ENCODE measurements at regions of chr1 and their contacts with region 1.

Region 1: DNA sequence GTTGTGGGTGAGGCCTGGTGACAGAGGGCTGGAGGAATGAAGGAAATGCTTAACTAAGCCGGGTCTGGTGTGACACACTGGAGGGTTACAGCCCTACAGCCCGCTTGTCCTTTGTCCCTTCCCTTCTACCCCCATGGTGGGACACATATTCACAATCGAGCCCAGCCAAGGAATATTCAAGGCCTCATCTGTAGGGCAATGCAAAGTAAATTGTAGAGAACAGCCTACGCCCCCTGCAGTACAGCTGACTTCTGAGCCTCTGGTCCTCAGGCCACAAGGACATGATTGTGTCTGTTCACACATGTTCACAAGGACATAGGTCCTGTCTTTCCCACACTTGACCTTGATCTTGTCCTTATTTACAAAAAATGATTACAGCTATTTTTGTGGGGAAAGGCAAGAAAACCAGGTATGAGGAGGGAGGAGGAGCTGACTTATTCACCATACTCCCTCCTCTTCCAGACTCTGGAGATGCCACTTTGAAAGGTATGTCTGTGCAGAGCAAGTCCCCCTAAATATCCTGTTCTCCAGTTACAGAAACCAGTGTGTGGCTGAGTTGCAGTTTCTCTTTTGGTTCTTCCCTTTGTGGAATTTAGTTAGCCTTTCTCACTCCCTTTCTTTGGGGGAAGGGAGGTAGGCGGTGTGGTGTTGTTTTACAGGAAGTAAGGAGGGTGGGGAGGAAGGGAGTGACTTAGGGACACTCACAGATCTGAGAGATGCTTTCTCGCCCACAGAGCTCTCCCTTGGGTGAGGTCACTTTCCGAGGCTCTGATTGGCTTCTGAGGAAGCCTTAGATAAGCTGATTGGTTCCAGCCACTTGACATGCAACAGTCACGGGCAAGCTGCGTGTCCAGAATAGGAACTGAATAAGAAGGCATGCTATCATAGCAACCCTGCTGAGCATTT is 14.6 kb downstream of the POLR3GL start:
- DNase-seq: peak; percentile 67 to 90
- H3K4me3 ChIP-seq: peak overlapping the region; percentile 1 to 41 (median 13); a peak in 5 of 8 replicates
- H3K27ac ChIP-seq: peak overlapping the region; percentile 89
- H3K4me1 ChIP-seq: peaks cover 4 to 18% (median 13%) of the 10 kb centered on the region in 4 experiments; a peak in 5 of 7 replicates
- H3K27me3 ChIP-seq: no peaks in the 10 kb centered on the region
- CTCF ChIP-seq: peak; percentile 23 to 53 (median 37); a peak in 3 of 4 replicates
- EP300 ChIP-seq: peak in 1 of 2 experiments; percentile 65; a peak in 1 of 3 replicates
- POLR2A ChIP-seq: peak in 1 of 2 experiments; percentile 70; a peak in 2 of 3 replicates
- RAD21 ChIP-seq: peak in 1 of 2 experiments; percentile 10; a peak in 1 of 4 replicates

Region 2: GRCh38 chr1:145729666-145730436 is 249.3 kb before region 1 on chr1:
- CTCF ChIA-PET with region 1: no interaction called
- POLR2A ChIA-PET with region 1: no interaction called
- DNase-seq: no peak
- H3K4me3 ChIP-seq: no peak overlapping the region
- H3K27ac ChIP-seq: no peak overlapping the region
- H3K4me1 ChIP-seq: peaks cover 0 to 6% (median 0%) of the 10 kb centered on the region in 4 experiments; a peak in 3 of 7 replicates
- H3K27me3 ChIP-seq: no peaks in the 10 kb centered on the region
- CTCF ChIP-seq: no peak
- EP300 ChIP-seq: no peak
- POLR2A ChIP-seq: no peak
- RAD21 ChIP-seq: no peak

Region 3: DNA sequence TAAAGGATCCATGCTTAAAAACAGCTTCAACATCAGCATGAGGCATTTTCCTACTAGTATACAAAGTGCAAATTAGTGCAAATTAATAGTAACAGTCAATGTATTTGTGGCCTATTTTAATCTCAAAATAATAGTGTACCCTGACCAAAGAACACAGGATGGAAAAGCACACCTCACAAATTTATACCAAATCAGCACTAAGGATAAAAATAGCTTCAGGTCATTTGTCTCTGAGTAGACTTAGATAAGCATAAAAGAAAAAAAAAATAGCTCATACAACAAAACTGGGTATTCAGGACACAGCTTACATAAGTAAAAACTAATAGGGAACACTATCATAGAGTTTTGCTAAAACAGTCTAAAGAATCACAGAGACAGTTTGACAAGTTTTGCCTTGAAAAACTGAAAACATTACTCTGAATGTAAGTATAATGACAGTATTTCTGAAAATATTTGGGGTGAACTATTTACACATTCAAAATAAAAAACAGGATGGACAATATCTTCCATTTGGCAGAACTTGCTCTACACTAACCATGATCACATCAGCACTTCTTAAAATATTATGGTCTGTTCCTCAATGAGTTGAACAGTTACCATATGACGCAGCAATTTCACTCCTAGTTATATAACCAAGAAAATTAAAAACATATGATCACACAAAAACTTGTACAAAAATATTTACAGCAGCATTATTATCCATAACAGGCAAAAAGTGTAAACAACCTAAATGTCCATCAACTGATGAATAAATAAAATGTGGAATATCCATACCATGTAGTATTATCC is 201.6 kb before region 1 on chr1:
- CTCF ChIA-PET with region 1: no interaction called
- POLR2A ChIA-PET with region 1: no interaction called
- DNase-seq: no peak
- H3K4me3 ChIP-seq: no peak overlapping the region
- H3K27ac ChIP-seq: no peak overlapping the region
- H3K4me1 ChIP-seq: no peaks in the 10 kb centered on the region
- H3K27me3 ChIP-seq: no peaks in the 10 kb centered on the region
- CTCF ChIP-seq: no peak
- EP300 ChIP-seq: no peak
- POLR2A ChIP-seq: no peak
- RAD21 ChIP-seq: no peak

Region 4: DNA sequence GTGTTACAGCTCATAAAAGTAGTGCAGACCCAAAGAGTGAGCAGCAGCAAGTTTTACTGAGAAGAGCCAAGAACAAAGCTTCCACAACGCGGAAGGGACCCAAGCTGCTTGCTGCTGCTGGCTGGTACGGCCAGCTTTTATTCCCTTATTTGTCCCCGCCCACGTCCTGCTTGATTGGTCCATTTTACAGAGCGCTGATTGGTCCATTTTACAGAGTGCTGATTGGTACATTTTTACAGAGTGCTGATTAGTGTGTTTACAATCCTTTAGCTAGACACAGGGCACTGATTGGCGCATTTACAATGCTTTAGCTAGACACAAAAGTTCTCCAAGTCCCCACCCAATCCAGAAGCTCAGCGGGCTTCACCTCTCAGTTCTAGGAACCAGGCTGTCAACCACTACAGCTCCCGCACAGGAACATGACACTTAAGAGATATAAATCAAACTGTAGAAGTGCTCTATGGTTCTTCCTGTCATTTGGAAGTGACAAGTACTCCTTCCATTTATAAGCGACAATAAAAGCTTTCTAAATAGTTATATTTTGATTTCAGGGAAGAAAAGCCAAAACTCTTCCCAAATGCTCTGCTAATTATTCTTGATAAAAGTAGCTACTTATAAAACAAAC is 183.7 kb before region 1 on chr1:
- CTCF ChIA-PET with region 1: no interaction called
- POLR2A ChIA-PET with region 1: no interaction called
- DNase-seq: no peak
- H3K4me3 ChIP-seq: no peak overlapping the region
- H3K27ac ChIP-seq: no peak overlapping the region
- H3K4me1 ChIP-seq: peaks cover 0 to 3% (median 0%) of the 10 kb centered on the region in 4 experiments; a peak in 2 of 7 replicates
- H3K27me3 ChIP-seq: no peaks in the 10 kb centered on the region
- CTCF ChIP-seq: no peak
- EP300 ChIP-seq: no peak
- POLR2A ChIP-seq: no peak
- RAD21 ChIP-seq: no peak

Region 5: DNA sequence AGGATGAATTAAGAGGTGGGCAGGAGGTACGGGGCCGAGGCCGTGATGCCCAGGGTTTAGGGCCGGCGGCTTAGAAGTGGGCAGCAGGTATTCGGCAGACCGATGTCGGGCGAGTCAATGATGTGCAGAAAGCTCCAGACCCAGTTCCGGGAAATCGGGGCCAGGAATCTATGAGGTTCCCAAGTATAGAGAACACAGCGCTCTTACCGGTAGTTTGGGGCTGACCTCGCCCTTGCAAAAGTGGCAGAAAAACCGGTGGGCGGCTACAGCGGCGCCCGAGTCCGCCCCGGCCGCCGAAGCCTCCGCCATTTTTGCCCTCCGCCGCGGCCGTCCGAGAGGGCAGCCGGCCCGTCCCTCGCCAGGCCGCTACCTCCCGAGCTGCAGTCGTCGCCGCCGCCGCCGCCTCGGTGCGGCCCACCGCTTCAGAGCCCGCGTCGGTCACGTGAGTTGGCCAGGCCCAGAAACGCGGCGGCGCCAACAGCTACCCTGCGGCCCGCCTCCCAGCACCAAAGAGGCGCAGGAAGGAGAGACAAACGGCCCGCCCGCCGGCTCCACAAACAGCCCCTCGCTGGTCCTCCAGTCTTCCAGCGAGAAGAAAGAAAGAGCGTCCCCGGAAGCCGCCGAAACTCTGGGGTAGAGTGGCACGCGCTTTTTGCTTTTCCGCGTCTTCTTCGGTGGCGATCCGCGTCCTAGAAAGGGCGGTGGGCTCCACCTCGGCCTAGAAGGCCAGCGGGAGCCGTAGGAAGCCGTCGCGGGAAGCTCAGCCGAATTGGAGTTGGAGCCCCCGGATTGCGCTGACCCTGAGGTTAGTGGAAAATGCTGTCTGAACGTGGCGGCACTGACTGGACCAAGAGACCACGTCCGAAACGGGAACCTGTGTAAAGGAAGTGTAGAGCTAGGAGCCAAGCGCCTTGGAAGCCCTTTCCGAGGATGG is 155.3 kb before region 1 on chr1 and contains the starts of genes POLR3C and RNF115:
- CTCF ChIA-PET with region 1: no interaction called
- POLR2A ChIA-PET with region 1: no interaction called
- DNase-seq: peak; percentile 62 to 88
- H3K4me3 ChIP-seq: peak within 1 kb of the TSS; percentile 75 to 100 (median 98)
- H3K27ac ChIP-seq: peak within 1 kb of the TSS; percentile 91
- H3K4me1 ChIP-seq: peaks cover 0 to 4% (median 0%) of the 10 kb centered on the region in 4 experiments; a peak in 1 of 7 replicates
- H3K27me3 ChIP-seq: no peaks in the 10 kb centered on the region
- CTCF ChIP-seq: no peak
- EP300 ChIP-seq: peak in 1 of 2 experiments; percentile 33; a peak in 1 of 3 replicates
- POLR2A ChIP-seq: peak in 1 of 2 experiments; percentile 69; a peak in 2 of 3 replicates
- RAD21 ChIP-seq: no peak
- total RNA-seq, gene POLR3C: 26.2 and 26.8 TPM in 2 replicates
- total RNA-seq, gene RNF115: 10.2 and 10.8 TPM in 2 replicates

Region 6: GRCh38 chr1:145858894-145859490 is 120.1 kb before region 1 on chr1 and contains the start of gene PIAS3:
- CTCF ChIA-PET with region 1: interaction called, 17 read pairs
- POLR2A ChIA-PET with region 1: interaction called, 3 read pairs
- DNase-seq: peak; percentile 72 to 95
- H3K4me3 ChIP-seq: peak within 1 kb of the TSS; percentile 63 to 95 (median 89)
- H3K27ac ChIP-seq: peak within 1 kb of the TSS; percentile 78
- H3K4me1 ChIP-seq: peaks cover 0 to 5% (median 3%) of the 10 kb centered on the region in 4 experiments; a peak in 4 of 7 replicates
- H3K27me3 ChIP-seq: no peaks in the 10 kb centered on the region
- CTCF ChIP-seq: no peak
- EP300 ChIP-seq: peak in 1 of 2 experiments; percentile 61; a peak in 1 of 3 replicates
- POLR2A ChIP-seq: no peak; a peak in 1 of 3 replicates
- RAD21 ChIP-seq: no peak
- total RNA-seq, gene PIAS3: 36.7 and 40.7 TPM in 2 replicates

Region 7: DNA sequence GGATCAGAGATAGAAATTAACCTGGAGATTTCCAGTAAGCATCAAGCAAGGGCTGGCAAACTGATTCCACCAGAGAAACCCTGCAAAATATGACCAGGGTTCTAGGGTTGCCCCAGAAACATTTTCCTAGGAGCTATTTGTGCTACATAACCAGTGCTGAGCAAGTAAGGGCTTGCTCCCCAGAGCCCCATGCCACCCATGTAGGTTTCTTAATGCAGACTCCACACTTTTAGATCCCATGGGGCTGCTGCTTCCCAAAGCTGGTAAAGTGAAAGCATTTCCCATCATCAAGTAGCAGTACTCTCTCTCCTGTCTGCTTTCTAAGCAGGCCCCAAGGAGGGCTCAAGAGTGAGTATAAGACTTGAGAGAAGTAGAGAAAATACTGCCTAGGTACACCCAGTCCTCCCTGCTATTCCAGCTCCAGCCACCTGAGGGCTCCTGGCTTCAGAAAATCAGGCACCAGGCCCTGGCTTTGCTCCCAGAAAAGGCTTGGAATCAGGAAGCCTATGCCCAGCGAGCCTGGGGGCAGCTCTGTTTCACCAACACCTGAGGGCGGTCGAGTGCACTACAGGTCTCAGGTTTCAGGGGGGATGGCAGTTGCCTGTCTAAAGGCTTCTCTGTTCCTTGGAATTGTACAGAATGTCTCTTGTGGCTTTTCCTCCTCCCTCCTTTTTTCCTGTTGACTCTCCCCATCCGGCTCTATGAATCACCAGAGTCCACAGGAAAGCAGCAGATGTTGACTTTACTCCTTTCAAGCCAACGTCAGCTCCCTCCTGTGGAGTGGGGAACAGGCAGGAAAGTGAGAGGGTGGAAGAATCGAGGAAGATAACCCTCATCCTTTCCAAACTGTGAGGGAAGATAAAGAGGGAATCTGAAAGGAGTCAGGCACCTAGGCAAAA is 87.3 kb before region 1 on chr1:
- CTCF ChIA-PET with region 1: interaction called, 34 read pairs
- POLR2A ChIA-PET with region 1: no interaction called
- DNase-seq: peak; percentile 94 to 96
- H3K4me3 ChIP-seq: peak overlapping the region in 3 of 4 experiments; percentile 2 to 48 (median 3); a peak in 4 of 8 replicates
- H3K27ac ChIP-seq: no peak overlapping the region
- H3K4me1 ChIP-seq: peaks cover 0 to 6% (median 4%) of the 10 kb centered on the region in 4 experiments; a peak in 3 of 7 replicates
- H3K27me3 ChIP-seq: no peaks in the 10 kb centered on the region
- CTCF ChIP-seq: peak; percentile 84 to 99 (median 99)
- EP300 ChIP-seq: no peak
- POLR2A ChIP-seq: peak in 1 of 2 experiments; percentile 27; a peak in 1 of 3 replicates
- RAD21 ChIP-seq: peak; percentile 96 to 99

Region 8: GRCh38 chr1:145996433-145997015 is 17.4 kb after region 1 on chr1 and contains the start of gene TXNIP:
- CTCF ChIA-PET with region 1: interaction called, 93 read pairs
- POLR2A ChIA-PET with region 1: interaction called, 218 read pairs
- DNase-seq: peak; percentile 76 to 86
- H3K4me3 ChIP-seq: peak within 1 kb of the TSS; percentile 89 to 96 (median 93)
- H3K27ac ChIP-seq: peak within 1 kb of the TSS; percentile 65
- H3K4me1 ChIP-seq: peaks cover 2 to 8% (median 6%) of the 10 kb centered on the region in 4 experiments; a peak in 4 of 7 replicates
- H3K27me3 ChIP-seq: no peaks in the 10 kb centered on the region
- CTCF ChIP-seq: no peak
- EP300 ChIP-seq: peak in 1 of 2 experiments; percentile 44; a peak in 1 of 3 replicates
- POLR2A ChIP-seq: peak; percentile 89 to 90
- RAD21 ChIP-seq: no peak
- total RNA-seq, gene TXNIP: 10.3 and 12.3 TPM in 2 replicates

Region 9: DNA sequence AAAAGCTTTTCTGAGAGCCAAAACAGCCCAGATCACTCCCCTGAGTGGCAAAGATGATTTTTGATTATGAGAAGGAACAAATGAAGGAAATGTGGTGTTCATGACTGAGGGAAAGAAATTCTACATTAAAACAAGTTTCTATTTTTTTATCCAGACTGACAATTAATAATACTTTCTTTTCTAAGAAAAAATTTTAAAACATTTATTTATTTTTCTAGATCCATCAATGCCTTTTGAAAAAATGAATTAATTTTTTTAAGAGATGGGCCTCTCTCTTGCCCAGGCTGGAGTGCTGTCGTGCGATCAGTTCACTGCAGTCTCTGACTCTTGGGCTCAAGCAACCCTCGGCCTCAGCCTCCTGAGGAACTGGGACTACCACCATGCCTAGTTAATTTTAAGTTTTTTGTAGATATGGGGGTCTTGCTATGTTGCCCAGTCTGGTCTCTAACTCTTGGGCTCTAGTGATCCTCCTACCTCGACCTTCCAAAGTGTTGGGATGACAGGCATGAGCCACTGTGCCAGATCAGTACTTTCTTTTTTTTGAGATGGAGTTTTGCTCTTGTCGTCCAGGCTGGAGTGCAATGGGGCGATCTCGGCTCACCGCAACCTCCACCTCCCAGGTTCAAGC is 28.5 kb after region 1 on chr1:
- CTCF ChIA-PET with region 1: interaction called, 152 read pairs
- POLR2A ChIA-PET with region 1: interaction called, 30 read pairs
- DNase-seq: no peak
- H3K4me3 ChIP-seq: no peak overlapping the region
- H3K27ac ChIP-seq: no peak overlapping the region
- H3K4me1 ChIP-seq: no peaks in the 10 kb centered on the region; a peak in 1 of 7 replicates
- H3K27me3 ChIP-seq: no peaks in the 10 kb centered on the region
- CTCF ChIP-seq: no peak
- EP300 ChIP-seq: no peak
- POLR2A ChIP-seq: no peak
- RAD21 ChIP-seq: no peak

Region 10: GRCh38 chr1:146019231-146020057 is 40.3 kb after region 1 on chr1:
- CTCF ChIA-PET with region 1: interaction called, 58 read pairs
- POLR2A ChIA-PET with region 1: interaction called, 4 read pairs
- DNase-seq: peak in 1 of 2 experiments; percentile 80
- H3K4me3 ChIP-seq: peak overlapping the region; percentile 31 to 58 (median 39)
- H3K27ac ChIP-seq: no peak overlapping the region
- H3K4me1 ChIP-seq: peaks cover 4 to 9% (median 6%) of the 10 kb centered on the region in 4 experiments
- H3K27me3 ChIP-seq: peaks cover 6 to 30% (median 24%) of the 10 kb centered on the region in 4 experiments
- CTCF ChIP-seq: peak in 1 of 3 experiments; percentile 0; a peak in 1 of 4 replicates
- EP300 ChIP-seq: no peak
- POLR2A ChIP-seq: peak in 1 of 2 experiments; percentile 54; a peak in 1 of 3 replicates
- RAD21 ChIP-seq: peak in 1 of 2 experiments; percentile 22; a peak in 1 of 4 replicates

Region 11: DNA sequence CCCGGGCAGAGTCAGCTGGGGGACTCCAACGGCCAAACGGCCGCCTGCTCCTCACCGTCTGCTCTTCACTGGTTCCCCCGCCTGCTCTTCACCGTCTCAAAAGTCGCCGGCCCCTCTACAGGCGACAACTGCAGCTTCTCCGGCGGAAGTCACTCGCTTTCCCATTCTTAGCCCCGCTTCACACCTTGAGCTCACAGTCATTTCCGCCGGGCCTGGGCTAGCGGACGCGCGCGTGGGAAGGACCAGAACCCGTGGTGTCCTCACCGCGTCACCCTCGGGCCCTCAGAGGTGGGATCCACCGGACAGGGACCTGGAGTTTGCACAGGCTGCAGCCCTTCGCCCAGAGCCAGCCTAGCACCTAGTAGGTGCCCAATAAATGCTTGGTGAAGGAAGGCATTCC is 70.3 kb after region 1 on chr1:
- CTCF ChIA-PET with region 1: interaction called, 7 read pairs
- POLR2A ChIA-PET with region 1: interaction called, 57 read pairs
- DNase-seq: no peak
- H3K4me3 ChIP-seq: no peak overlapping the region
- H3K27ac ChIP-seq: no peak overlapping the region
- H3K4me1 ChIP-seq: no peaks in the 10 kb centered on the region
- H3K27me3 ChIP-seq: no peaks in the 10 kb centered on the region
- CTCF ChIP-seq: no peak
- EP300 ChIP-seq: no peak
- POLR2A ChIP-seq: no peak
- RAD21 ChIP-seq: no peak